HCT116 (cell line): ENCODE measurements at regions of chr17 and their contacts with region 1.

Region 1: DNA sequence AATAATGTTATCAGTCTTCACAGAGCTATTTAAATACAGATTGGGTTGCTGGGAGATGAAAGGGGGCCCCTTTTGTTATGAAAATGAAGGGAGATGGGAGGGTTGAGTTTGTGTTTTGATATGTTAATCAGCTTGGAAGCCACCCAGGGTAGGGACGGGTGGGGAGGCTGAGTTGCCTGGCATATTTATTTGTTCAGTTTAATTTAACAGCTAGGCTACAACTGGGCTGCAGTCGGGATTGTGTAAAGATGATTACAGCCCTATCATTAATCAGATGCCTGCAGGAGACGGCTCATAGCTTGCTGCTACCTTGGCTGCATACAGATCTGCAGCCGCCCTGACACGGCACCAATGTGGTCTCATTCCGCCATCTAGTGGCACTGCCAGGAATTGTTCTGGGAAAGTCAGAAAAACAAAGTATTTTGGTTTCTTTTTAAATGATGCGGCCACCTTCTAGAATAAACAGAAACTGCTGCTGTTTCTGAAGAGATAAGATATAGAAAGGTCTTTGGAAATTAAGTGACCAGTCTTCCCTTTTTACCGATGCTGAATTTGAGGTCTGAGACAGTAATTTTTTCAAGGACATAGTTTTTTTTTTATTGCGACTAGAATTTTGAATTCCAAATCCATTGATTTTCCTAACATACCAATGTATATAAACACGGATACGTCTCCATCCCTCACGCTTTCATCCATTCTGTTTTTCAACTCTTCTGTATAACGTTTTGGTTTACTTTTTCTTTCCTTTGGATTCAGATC is 458.0 kb upstream of the ASIC2 start:
- DNase-seq: peak; percentile 7
- ATAC-seq: peak; percentile 58; the same call in 1 of the 2 replicates
- H3K4me3 ChIP-seq: no peak overlapping the region
- H3K27ac ChIP-seq: no peak overlapping the region
- H3K4me1 ChIP-seq: no peaks in the 10 kb centered on the region
- H3K27me3 ChIP-seq: no peaks in the 10 kb centered on the region
- CTCF ChIP-seq: peak; percentile 42 to 87 (median 72); a peak in 5 of 6 replicates
- POLR2A ChIP-seq: no peak
- RAD21 ChIP-seq: peak; percentile 68

Region 2: DNA sequence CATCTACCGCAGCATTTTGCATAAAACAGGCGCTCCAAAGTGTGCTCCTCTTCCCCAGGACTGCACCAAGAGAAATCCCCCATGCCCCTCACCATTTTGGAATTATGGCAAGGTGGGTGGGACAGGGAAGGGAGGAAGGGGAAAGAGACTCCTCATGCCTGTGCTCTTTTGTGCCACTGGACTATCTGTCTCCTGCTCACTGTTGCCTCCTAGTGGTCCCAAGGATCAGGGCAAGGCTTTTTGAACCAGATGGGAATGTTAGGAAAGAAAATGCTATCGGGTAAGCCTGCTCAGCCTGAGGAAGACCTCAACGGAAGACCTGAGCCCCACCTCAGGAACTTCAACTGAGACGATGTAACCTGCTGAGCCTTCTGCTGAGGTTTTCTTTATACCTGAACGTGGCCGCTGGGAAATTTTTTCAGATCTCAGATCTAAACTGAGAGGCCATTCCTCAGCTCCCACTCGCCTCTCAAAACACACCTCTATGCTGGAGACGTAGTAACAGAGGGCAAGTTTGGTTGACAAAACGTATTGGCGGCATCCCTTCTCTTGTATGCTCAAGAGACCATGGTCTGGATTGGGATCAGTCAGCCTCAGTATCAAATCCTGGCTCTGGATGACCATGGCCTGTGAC is 701.2 kb before region 1 on chr17:
- CTCF ChIA-PET with region 1: no interaction called
- POLR2A ChIA-PET with region 1: no interaction called
- RAD21 ChIA-PET with region 1: no interaction called
- intact Hi-C with region 1: loop called (anchors 10 kb)
- DNase-seq: peak; percentile 31
- ATAC-seq: peak; percentile 87
- H3K4me3 ChIP-seq: no peak overlapping the region
- H3K27ac ChIP-seq: no peak overlapping the region
- H3K4me1 ChIP-seq: no peaks in the 10 kb centered on the region
- H3K27me3 ChIP-seq: peaks cover 23% of the 10 kb centered on the region; the same call in 1 of the 2 replicates
- CTCF ChIP-seq: peak; percentile 21 to 96 (median 91); a peak in 4 of 6 replicates
- POLR2A ChIP-seq: no peak
- RAD21 ChIP-seq: peak; percentile 30; the same call in 1 of the 2 replicates

Region 3: GRCh38 chr17:33696102-33696501 is 55.0 kb before region 1 on chr17:
- CTCF ChIA-PET with region 1: no interaction called
- POLR2A ChIA-PET with region 1: no interaction called
- RAD21 ChIA-PET with region 1: no interaction called
- intact Hi-C with region 1: no loop called
- DNase-seq: no peak
- ATAC-seq: no peak
- H3K4me3 ChIP-seq: no peak overlapping the region
- H3K27ac ChIP-seq: no peak overlapping the region
- H3K4me1 ChIP-seq: no peaks in the 10 kb centered on the region
- H3K27me3 ChIP-seq: no peaks in the 10 kb centered on the region
- CTCF ChIP-seq: no peak
- POLR2A ChIP-seq: no peak
- RAD21 ChIP-seq: no peak